Cardiac septum (tissue), 1 donor: ENCODE measurements at regions of chr2 and their contacts with region 1.

Region 1: GRCh38 chr2:30410217-30410616 is 36.8 kb upstream of the LCLAT1 start:
- DNase-seq: no peak

Region 2: GRCh38 chr2:30231212-30231995 is 178.8 kb before region 1 on chr2 and contains the start of gene LBH:
- intact Hi-C with region 1: loop called (anchors 2 kb)
- DNase-seq: peak; percentile 94
- total RNA-seq, gene LBH: 208 TPM

Region 3: GRCh38 chr2:30346471-30347169 is 63.6 kb before region 1 on chr2:
- intact Hi-C with region 1: loop called (anchors 1 kb)
- DNase-seq: peak; percentile 93

Region 4: GRCh38 chr2:30511122-30512083 is 101.2 kb after region 1 on chr2:
- intact Hi-C with region 1: loop called (anchors 5 kb)
- DNase-seq: no peak

Region 5: DNA sequence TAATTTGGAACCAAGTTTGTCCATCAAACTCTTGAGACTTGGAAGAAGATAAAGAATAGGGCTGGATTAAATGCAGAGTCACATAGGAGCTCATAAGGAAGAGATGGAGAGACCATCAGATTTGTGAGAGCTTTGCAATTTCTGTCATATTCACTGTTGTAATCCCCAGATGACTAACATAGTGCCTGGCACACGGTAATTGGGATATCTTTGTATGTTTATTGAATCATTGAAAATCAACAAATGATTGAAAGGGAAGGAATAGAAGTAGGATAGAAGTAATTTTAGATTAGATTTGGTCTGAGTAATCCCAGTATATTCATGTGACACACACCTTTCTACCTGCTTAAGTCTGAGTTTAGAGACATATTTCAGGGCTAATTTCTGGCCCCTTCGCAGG is 112.2 kb after region 1 on chr2:
- intact Hi-C with region 1: no loop called
- DNase-seq: no peak

Region 6: DNA sequence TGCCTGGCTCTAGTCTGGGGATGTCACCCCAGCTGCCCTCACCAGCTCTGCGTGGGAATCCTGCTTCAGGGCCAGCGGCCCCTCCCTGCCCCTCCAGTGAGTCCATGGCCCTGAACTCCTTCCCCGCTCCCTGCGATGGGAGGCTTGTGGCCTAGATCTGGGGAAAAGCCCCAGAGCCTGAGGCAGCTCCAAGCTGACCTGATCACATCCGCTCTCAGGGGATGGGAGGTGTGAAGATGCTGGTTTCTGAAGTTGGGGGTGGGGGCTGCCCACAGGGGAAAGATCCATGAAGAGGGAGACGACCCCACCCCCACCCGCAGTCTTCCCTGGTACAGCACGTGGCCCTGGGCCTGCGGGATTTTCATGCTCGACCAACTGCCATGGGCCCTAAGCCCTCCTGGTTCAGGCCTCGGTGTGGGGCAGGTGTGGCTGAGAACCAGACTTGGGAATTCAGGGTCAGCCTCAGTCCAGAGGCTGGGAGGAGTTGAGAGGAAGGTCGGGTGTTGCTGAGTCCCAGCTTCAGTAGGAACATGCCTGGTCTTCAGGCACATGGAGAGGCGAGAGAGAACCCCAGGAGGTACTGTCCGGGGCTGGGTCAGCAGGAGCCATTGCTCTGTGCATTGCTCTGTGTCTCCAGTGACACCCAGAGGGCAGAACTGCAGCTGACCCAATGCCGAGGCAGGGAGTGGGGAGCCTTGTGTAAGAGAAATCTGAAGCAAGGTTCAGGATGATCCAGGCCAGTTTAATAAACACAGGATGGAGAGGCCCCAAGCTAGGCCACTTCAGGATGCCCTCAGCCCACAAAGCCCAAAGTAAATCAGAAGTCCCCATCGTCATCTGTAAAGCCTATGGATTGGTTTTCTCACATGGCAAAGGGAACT is 282.0 kb after region 1 on chr2:
- intact Hi-C with region 1: loop called (anchors 2 kb)
- DNase-seq: no peak

Region 7: GRCh38 chr2:31129375-31130171 is 719.4 kb after region 1 on chr2:
- intact Hi-C with region 1: no loop called
- DNase-seq: no peak